ENCODE measurements at regions of chr2 and their contacts with region 1.

Region 1: GRCh38 chr2:8693155-8693821 is 11.4 kb downstream of the ID2 start:
- DNase-seq: peak; percentile 86
- H3K4me3 ChIP-seq: peak overlapping the region; percentile 13 to 30
- H3K27ac ChIP-seq: no peak overlapping the region
- H3K4me1 ChIP-seq: no peaks in the 10 kb centered on the region; a peak in 1 of 4 replicates
- H3K27me3 ChIP-seq: no peaks in the 10 kb centered on the region
- CTCF ChIP-seq: peak; percentile 72
- EP300 ChIP-seq: no peak
- RAD21 ChIP-seq: peak; percentile 59

Region 2: GRCh38 chr2:8710951-8711350 is 17.7 kb after region 1 on chr2:
- CTCF ChIA-PET with region 1: interaction called, 10 read pairs
- POLR2A ChIA-PET with region 1: no interaction called
- DNase-seq: no peak
- H3K4me3 ChIP-seq: no peak overlapping the region
- H3K27ac ChIP-seq: no peak overlapping the region
- H3K4me1 ChIP-seq: no peaks in the 10 kb centered on the region; a peak in 1 of 4 replicates
- H3K27me3 ChIP-seq: no peaks in the 10 kb centered on the region
- CTCF ChIP-seq: no peak
- EP300 ChIP-seq: no peak
- RAD21 ChIP-seq: no peak

Region 3: GRCh38 chr2:8737571-8738175 is 44.4 kb after region 1 on chr2:
- CTCF ChIA-PET with region 1: interaction called, 11 read pairs
- POLR2A ChIA-PET with region 1: no interaction called
- DNase-seq: no peak
- H3K4me3 ChIP-seq: no peak overlapping the region
- H3K27ac ChIP-seq: peak overlapping the region in 1 of 2 experiments; percentile 21; a peak in 1 of 4 replicates
- H3K4me1 ChIP-seq: peaks cover 3 to 8% of the 10 kb centered on the region in 2 experiments; a peak in 2 of 4 replicates
- H3K27me3 ChIP-seq: no peaks in the 10 kb centered on the region
- CTCF ChIP-seq: no peak
- EP300 ChIP-seq: no peak
- RAD21 ChIP-seq: no peak

Region 4: DNA sequence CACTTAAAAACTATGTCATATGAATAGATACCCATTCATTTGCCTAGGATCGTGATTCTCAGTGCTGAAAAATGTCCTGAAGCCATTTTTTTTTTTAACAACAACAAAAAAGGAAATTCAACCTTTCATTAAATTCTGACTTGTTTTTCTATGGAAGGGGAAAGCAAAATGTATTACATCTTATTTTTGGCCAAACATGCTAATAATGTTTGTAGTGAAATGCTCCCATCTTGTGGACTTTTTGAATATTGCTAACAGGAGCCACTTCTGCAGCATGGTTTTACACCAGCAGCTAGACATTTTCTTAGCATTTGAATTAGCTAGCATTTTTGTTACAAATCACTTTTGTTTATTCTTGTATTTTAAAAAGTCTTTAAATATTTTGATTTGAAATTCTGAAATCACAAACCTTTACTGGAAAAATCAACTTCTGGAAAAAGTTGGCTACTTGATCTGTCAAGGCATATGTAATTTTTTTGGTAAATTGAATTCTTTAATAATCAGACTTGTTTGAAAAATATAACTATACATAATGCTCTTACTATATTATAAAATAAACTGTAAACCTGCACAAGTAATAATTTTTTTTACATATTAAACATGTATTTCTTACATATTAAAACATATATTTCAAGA is 68.4 kb after region 1 on chr2:
- CTCF ChIA-PET with region 1: interaction called, 19 read pairs
- POLR2A ChIA-PET with region 1: no interaction called
- DNase-seq: peak; percentile 63
- H3K4me3 ChIP-seq: no peak overlapping the region
- H3K27ac ChIP-seq: no peak overlapping the region
- H3K4me1 ChIP-seq: no peaks in the 10 kb centered on the region; a peak in 1 of 4 replicates
- H3K27me3 ChIP-seq: no peaks in the 10 kb centered on the region
- CTCF ChIP-seq: peak; percentile 89
- EP300 ChIP-seq: no peak
- RAD21 ChIP-seq: peak; percentile 92

Region 5: GRCh38 chr2:8767324-8767723 is 74.0 kb after region 1 on chr2:
- CTCF ChIA-PET with region 1: interaction called, 14 read pairs
- POLR2A ChIA-PET with region 1: no interaction called
- DNase-seq: no peak
- H3K4me3 ChIP-seq: no peak overlapping the region
- H3K27ac ChIP-seq: no peak overlapping the region
- H3K4me1 ChIP-seq: no peaks in the 10 kb centered on the region; a peak in 1 of 4 replicates
- H3K27me3 ChIP-seq: no peaks in the 10 kb centered on the region
- CTCF ChIP-seq: no peak
- EP300 ChIP-seq: no peak
- RAD21 ChIP-seq: no peak